ENCODE measurements at regions of chr15 and their contacts with region 1.

Region 1: GRCh38 chr15:101288908-101289513 is 6.0 kb downstream of the SNRPA1 start:
- DNase-seq: peak; percentile 73 to 85
- ATAC-seq: peak; percentile 73 to 78; a peak in 4 of 6 replicates
- H3K4me3 ChIP-seq: no peak overlapping the region
- H3K27ac ChIP-seq: no peak overlapping the region
- H3K4me1 ChIP-seq: peaks cover 19% of the 10 kb centered on the region
- CTCF ChIP-seq: peak; percentile 89
- EP300 ChIP-seq: no peak
- POLR2A ChIP-seq: no peak
- RAD21 ChIP-seq: peak; percentile 47 to 54

Region 2: GRCh38 chr15:101277038-101277882 is 11.8 kb before region 1 on chr15 and contains the start of gene SELENOS:
- CTCF ChIA-PET with region 1: interaction called, 29 read pairs
- POLR2A ChIA-PET with region 1: interaction called, 3 read pairs
- DNase-seq: peak; percentile 76 to 91
- ATAC-seq: peak; percentile 93 to 96
- H3K4me3 ChIP-seq: peak within 1 kb of the TSS; percentile 77
- H3K27ac ChIP-seq: peak within 1 kb of the TSS; percentile 84 to 91
- H3K4me1 ChIP-seq: peaks cover 13% of the 10 kb centered on the region
- CTCF ChIP-seq: no peak; the same call in 2 of the 3 replicates
- EP300 ChIP-seq: no peak
- POLR2A ChIP-seq: peak; percentile 70
- RAD21 ChIP-seq: no peak
- polyA plus RNA-seq, gene SELENOS: 128 and 184 TPM in 2 replicates

Region 3: GRCh38 chr15:101307048-101307896 is 18.3 kb after region 1 on chr15:
- CTCF ChIA-PET with region 1: interaction called, 29 read pairs
- POLR2A ChIA-PET with region 1: no interaction called
- DNase-seq: no peak
- ATAC-seq: peak in 1 of 2 experiments; percentile 11; a peak in 3 of 6 replicates
- H3K4me3 ChIP-seq: no peak overlapping the region
- H3K27ac ChIP-seq: no peak overlapping the region
- H3K4me1 ChIP-seq: no peaks in the 10 kb centered on the region
- CTCF ChIP-seq: no peak
- EP300 ChIP-seq: no peak
- POLR2A ChIP-seq: no peak
- RAD21 ChIP-seq: no peak

Region 4: DNA sequence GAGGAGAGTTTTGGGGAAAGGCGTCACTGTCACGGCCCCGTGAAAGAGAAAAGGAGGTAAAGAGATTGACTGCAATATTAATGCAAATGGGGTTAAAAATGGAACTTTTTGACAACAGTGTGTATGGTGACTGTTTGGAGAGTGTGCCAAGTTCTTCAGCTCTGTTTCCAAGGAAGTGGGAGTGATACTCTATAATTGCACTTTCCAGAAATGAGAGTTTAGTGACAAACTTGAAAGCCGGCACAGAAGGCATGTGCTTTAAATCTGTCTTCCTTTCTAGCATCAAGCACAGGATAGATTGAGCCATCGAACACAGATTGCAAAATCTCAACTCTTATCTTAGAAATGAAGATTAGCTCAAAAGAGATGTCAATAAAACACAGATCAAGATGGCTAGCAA is 57.9 kb after region 1 on chr15:
- CTCF ChIA-PET with region 1: no interaction called
- POLR2A ChIA-PET with region 1: no interaction called
- DNase-seq: no peak
- ATAC-seq: no peak
- H3K4me3 ChIP-seq: no peak overlapping the region
- H3K27ac ChIP-seq: no peak overlapping the region
- H3K4me1 ChIP-seq: peaks cover 14% of the 10 kb centered on the region
- CTCF ChIP-seq: no peak
- EP300 ChIP-seq: no peak
- POLR2A ChIP-seq: no peak
- RAD21 ChIP-seq: no peak

Region 5: DNA sequence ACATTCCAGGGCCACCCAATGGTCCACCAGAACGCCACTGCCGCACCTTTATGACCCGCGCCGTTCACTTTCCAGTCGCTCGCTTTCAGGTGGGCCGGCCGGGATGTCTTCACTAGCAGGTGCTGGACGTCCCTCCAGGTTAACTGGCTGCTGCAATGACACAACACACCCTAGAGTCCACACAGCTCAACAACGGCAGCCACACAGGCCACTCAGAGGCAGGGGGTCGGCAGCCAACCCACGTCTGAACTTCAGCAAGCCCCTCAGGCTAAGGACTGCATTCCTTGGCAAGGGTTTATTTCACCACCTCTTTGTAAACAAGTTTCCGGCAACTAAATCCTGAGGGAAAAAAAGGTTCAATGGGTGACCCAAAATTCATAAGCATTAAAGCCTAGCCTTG is 95.3 kb after region 1 on chr15:
- CTCF ChIA-PET with region 1: no interaction called
- POLR2A ChIA-PET with region 1: no interaction called
- DNase-seq: no peak
- ATAC-seq: no peak
- H3K4me3 ChIP-seq: no peak overlapping the region
- H3K27ac ChIP-seq: no peak overlapping the region
- H3K4me1 ChIP-seq: no peaks in the 10 kb centered on the region
- CTCF ChIP-seq: no peak
- EP300 ChIP-seq: no peak
- POLR2A ChIP-seq: no peak
- RAD21 ChIP-seq: no peak

Region 6: GRCh38 chr15:101646672-101647071 is 357.7 kb after region 1 on chr15:
- CTCF ChIA-PET with region 1: interaction called, 251 read pairs
- POLR2A ChIA-PET with region 1: interaction called, 6 read pairs
- DNase-seq: peak in 1 of 2 experiments; percentile 25
- ATAC-seq: no peak; a peak in 1 of 6 replicates
- H3K4me3 ChIP-seq: no peak overlapping the region
- H3K27ac ChIP-seq: no peak overlapping the region
- H3K4me1 ChIP-seq: peaks cover 15% of the 10 kb centered on the region
- CTCF ChIP-seq: no peak
- EP300 ChIP-seq: no peak
- POLR2A ChIP-seq: no peak
- RAD21 ChIP-seq: no peak